ENCODE measurements at regions of chr14 and their contacts with region 1.

Region 1: GRCh38 chr14:102316743-102317563 is 2.6 kb upstream of the ZNF839 start:
- DNase-seq: peak; percentile 92 to 96
- H3K4me3 ChIP-seq: peak overlapping the region; percentile 52 to 64
- H3K27ac ChIP-seq: peak overlapping the region; percentile 94 to 97
- H3K4me1 ChIP-seq: peaks cover 0 to 45% (median 28%) of the 10 kb centered on the region in 4 donors
- H3K27me3 ChIP-seq: no peaks in the 10 kb centered on the region
- CTCF ChIP-seq: peak; percentile 76 to 81

Region 2: DNA sequence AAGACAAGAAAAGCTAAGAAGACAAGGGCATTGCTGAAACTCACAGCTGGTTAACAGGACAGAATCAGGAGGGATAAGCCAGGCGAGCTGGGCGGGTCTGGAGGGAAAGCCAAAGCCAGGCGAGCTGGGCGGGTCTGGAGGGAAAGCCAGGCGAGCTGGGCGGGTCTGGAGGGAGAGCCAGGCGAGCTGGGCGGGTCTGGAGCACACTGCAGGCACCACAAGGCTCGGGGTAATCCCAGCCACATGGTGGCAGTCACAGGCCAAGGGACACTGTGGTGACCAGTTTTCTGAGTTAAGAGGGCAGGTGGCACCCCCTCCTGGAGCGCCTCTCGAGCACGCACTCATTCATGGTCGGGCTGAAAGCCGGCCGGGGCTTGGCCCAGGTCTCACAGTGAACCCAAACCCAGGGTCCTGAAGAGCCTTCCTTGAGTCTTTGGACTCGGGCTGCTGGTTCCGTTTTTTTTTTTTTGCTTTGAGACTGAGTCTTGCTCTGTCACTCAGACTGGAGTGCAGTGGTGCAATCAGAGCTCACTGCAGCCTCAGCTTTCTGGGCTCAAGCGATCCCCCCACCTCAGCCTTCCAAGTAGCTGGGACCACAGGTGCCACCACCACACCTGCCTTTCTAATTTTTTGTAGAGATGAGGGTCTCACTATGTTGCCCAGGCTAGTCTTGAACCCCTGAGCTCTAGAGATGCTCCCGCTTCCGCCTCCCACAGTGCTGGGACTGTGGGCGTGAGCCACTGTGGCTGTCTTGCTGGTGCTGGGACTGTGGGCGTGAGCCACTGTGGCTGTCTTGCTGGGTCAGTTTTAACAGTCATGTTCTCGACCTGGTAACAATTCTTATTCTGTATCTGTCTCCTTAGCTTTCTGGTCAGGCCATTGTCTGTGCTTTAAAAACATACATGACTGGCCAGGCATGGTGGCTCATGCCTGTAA is 270.3 kb before region 1 on chr14:
- intact Hi-C with region 1: loop called (anchors 5 kb)
- DNase-seq: peak; percentile 87 to 95
- H3K4me3 ChIP-seq: no peak overlapping the region
- H3K27ac ChIP-seq: peak overlapping the region in 1 of 2 donors; percentile 49
- H3K4me1 ChIP-seq: peaks cover 0 to 9% (median 7%) of the 10 kb centered on the region in 4 donors
- H3K27me3 ChIP-seq: no peaks in the 10 kb centered on the region
- CTCF ChIP-seq: peak; percentile 56 to 59

Region 3: GRCh38 chr14:102139248-102140026 is 177.5 kb before region 1 on chr14 and contains the start of gene WDR20:
- intact Hi-C with region 1: loop called (anchors 10 kb)
- DNase-seq: peak; percentile 97 to 98
- H3K4me3 ChIP-seq: peak within 1 kb of the TSS; percentile 72 to 95
- H3K27ac ChIP-seq: peak within 1 kb of the TSS; percentile 85 to 88
- H3K4me1 ChIP-seq: peaks cover 0 to 28% (median 17%) of the 10 kb centered on the region in 4 donors
- H3K27me3 ChIP-seq: no peaks in the 10 kb centered on the region
- CTCF ChIP-seq: no peak

Region 4: DNA sequence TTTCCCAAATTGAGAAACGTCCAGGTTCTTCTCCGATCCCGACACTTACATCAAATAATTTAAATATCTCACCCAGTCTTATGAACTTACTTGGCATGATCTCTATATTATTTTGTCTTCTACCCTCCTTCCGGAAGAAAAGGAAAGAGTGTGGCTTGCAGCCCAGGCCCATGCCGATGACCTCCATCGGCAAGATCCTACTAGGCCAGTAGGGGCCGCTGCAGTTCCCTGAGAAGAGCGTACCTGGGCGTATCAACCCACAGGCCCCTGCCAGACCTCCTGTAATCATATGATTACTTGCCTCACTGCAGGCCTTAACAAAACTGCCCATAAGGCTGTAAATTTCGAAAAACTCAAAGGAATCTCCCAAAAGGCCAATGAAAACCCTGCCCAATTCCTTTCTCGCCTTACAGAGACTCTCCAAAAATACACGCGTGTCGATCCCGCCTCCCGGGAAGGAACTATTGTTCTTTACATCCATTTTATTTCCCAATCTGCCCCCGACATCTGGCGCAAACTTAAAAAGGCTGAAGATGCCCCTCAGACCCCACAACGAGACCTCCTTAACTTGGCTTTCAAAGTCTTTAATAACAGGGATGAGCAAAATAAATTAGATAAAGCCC is 81.6 kb before region 1 on chr14:
- intact Hi-C with region 1: loop called (anchors 5 kb)
- DNase-seq: peak; percentile 80 to 81
- H3K4me3 ChIP-seq: peak overlapping the region in 1 of 2 donors; percentile 9
- H3K27ac ChIP-seq: no peak overlapping the region
- H3K4me1 ChIP-seq: peaks cover 0 to 6% (median 0%) of the 10 kb centered on the region in 4 donors
- H3K27me3 ChIP-seq: no peaks in the 10 kb centered on the region
- CTCF ChIP-seq: peak; percentile 69 to 78

Region 5: DNA sequence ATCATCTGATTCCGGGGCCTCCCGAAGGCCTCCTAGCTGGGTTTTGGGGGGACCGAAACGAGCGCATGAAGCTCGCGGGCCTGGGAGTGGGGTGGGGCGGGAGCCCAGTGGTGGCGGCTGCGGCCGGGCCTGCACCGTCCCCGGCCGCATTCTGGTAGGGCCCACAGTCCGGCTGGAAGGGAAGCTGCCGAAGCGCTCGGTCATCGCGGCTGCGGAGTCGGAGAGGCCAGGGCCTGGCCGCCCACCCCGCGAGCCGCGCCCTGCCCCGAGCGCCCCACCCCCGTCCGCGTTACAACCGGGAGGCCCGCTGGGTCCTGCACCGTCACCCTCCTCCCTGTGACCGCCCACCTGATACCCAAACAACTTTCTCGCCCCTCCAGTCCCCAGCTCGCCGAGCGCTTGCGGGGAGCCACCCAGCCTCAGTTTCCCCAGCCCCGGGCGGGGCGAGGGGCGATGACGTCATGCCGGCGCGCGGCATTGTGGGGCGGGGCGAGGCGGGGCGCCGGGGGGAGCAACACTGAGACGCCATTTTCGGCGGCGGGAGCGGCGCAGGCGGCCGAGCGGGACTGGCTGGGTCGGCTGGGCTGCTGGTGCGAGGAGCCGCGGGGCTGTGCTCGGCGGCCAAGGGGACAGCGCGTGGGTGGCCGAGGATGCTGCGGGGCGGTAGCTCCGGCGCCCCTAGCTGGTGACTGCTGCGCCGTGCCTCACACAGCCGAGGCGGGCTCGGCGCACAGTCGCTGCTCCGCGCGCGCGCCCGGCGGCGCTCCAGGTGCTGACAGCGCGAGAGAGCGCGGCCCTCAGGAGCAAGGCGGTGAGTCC is 1311.9 kb after region 1 on chr14 and contains the start of gene KLC1:
- intact Hi-C with region 1: loop called (anchors 5 kb)
- DNase-seq: peak; percentile 77 to 92
- H3K4me3 ChIP-seq: peak within 1 kb of the TSS; percentile 80 to 96
- H3K27ac ChIP-seq: peak within 1 kb of the TSS; percentile 96 to 99
- H3K4me1 ChIP-seq: peaks cover 4 to 72% (median 60%) of the 10 kb centered on the region in 4 donors
- H3K27me3 ChIP-seq: no peaks in the 10 kb centered on the region
- CTCF ChIP-seq: no peak